ENCODE measurements at regions of chr6 and their contacts with region 1.

Region 1: DNA sequence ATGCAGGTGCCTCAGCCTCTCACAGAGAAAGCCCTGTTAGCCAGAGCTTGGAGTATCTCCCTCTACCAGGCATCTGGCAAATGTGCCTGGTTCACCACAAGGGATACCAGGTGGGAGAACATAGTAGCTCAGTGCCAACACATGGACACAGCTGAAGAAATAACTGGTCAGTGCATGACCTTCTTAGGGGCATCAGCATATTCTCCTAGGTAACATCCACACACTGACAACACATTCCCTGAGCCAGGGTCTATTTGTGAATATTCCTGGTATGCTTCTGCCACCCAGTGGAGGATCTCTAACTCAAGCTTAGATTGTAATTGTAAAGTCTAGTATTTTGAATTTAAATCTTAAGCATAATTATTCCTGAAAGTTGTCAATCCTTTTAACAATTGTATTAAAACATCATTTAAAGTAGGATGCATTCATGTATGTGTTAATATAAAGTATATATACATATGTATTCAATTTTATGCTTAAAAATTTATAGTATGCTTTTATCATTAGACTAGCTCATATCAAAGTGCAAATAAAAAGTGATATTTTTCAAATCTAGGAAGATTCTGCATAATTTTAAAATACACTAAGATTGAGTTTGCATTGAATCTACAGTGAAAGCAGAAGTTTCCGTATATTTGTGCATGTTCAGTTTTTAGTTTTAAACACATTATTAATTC is 45.3 kb upstream of the COL21A1 start:
- DNase-seq: peak in 1 of 10 donors; percentile 36
- H3K4me3 ChIP-seq: no peak overlapping the region
- H3K27ac ChIP-seq: no peak overlapping the region
- H3K27me3 ChIP-seq: no peaks in the 10 kb centered on the region
- CTCF ChIP-seq: peak; percentile 37 to 87 (median 64)

Region 2: GRCh38 chr6:55276745-55277530 is 1015.7 kb before region 1 on chr6:
- intact Hi-C with region 1: loop called in 1 of 2 experiments (anchors 10 kb)
- DNase-seq: peak in 1 of 10 donors; percentile 10
- H3K4me3 ChIP-seq: no peak overlapping the region
- H3K27ac ChIP-seq: no peak overlapping the region
- H3K27me3 ChIP-seq: no peaks in the 10 kb centered on the region
- CTCF ChIP-seq: peak; percentile 38 to 76 (median 60)

Region 3: GRCh38 chr6:55445648-55446204 is 846.9 kb before region 1 on chr6:
- intact Hi-C with region 1: loop called in 1 of 2 experiments (anchors 10 kb)
- DNase-seq: no peak
- H3K4me3 ChIP-seq: no peak overlapping the region
- H3K27ac ChIP-seq: no peak overlapping the region
- H3K27me3 ChIP-seq: no peaks in the 10 kb centered on the region
- CTCF ChIP-seq: peak; percentile 46 to 85 (median 68)

Region 4: GRCh38 chr6:55980627-55981211 is 311.9 kb before region 1 on chr6:
- intact Hi-C with region 1: loop called (anchors 5 kb)
- DNase-seq: no peak
- H3K4me3 ChIP-seq: no peak overlapping the region
- H3K27ac ChIP-seq: no peak overlapping the region
- H3K27me3 ChIP-seq: no peaks in the 10 kb centered on the region
- CTCF ChIP-seq: peak; percentile 43 to 89 (median 78)

Region 5: DNA sequence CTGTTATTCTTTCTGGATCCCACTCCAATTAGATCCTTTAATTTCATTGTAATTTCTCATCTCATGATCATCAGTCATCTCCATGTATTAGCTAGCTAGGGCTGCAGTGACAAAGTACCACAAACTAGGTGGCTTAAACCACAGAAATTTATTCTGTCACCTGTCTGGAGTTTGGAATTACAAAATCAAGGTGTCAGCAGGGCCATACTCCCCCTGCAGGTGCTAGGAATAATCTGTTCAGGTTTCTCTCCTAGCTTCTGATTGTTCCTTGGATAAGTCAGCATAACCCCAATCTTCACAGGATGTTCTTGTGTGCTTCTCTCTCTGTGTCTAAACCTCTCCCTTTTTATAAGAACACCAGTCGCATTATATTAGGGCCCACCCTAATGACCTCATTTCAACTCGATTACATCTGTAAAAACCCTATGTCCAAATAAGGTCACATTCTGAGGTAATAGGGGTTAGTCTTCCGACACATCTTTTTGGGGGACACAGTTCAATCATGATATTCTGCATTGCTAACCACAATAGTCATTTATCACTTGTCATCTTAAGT is 702.8 kb after region 1 on chr6:
- intact Hi-C with region 1: no loop called
- DNase-seq: no peak
- H3K4me3 ChIP-seq: no peak overlapping the region
- H3K27ac ChIP-seq: no peak overlapping the region
- H3K27me3 ChIP-seq: no peaks in the 10 kb centered on the region
- CTCF ChIP-seq: no peak